ENCODE measurements at regions of chr2 and their contacts with region 1.

Region 1: GRCh38 chr2:62844311-62845090 is 139.0 kb downstream of the EHBP1 start:
- DNase-seq: no peak
- ATAC-seq: no peak

Region 2: GRCh38 chr2:62467475-62468321 is 376.8 kb before region 1 on chr2:
- intact Hi-C with region 1: loop called (anchors 5 kb)
- DNase-seq: peak; percentile 65
- ATAC-seq: peak; percentile 65

Measured in left ventricle myocardium superior (tissue), 1 donor.